Transverse colon (tissue), 4 donors: ENCODE measurements at regions of chr11 and their contacts with region 1.

Region 1: GRCh38 chr11:11787305-11788062 is 54.3 kb upstream of the USP47 start:
- DNase-seq: peak; percentile 81
- H3K4me3 ChIP-seq: no peak overlapping the region
- H3K27ac ChIP-seq: no peak overlapping the region
- H3K4me1 ChIP-seq: no peaks in the 10 kb centered on the region
- H3K27me3 ChIP-seq: no peaks in the 10 kb centered on the region
- CTCF ChIP-seq: peak; percentile 85 to 92 (median 87)
- EP300 ChIP-seq: no peak
- POLR2A ChIP-seq: no peak

Region 2: DNA sequence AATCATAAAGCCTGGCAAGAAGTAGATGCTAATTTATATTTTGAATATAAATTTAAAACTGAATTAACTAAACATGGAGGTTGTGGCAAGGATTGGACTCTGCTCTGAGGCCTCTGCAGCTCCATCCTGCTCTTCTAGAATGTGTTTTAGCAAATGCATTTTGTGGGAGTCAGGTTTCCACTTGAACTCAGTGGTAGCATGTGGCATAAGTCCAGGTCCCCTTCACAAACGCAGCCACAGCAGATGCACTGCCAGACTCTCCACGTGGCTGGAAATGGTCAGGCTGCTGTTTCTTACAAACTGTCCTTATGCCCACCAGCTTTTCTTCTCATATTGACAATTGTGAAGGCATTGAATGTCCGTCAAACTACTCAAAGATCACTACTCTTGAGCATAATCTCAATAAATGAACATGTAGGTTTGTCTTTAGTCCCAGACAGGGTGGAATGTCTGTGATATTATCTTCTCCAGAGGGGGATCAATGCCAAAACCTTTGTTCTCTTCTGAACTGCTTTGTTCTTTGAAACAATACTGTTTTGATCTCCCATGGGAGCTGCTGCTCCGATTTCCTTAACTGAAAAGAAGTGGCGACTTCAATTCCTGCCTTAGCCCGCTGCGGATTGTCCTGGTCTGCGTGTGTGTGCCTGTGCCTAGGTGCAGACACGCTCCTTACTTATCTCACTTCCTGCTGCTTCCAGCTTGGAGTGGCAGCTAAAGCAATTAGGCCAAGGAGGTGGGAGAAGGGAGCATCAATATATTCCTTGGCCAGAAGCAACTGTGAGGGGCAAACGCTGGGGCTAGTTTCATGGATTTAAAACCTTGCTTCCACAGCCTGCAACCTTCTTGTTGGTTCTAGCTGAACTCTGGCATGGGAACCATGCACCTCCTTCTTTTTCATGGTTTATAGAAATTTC is 1003.0 kb before region 1 on chr11:
- in situ Hi-C with region 1: loop called in 1 of 4 experiments (anchors 10 kb)
- intact Hi-C with region 1: no loop called
- DNase-seq: no peak
- H3K4me3 ChIP-seq: no peak overlapping the region
- H3K27ac ChIP-seq: no peak overlapping the region
- H3K4me1 ChIP-seq: no peaks in the 10 kb centered on the region
- H3K27me3 ChIP-seq: no peaks in the 10 kb centered on the region
- CTCF ChIP-seq: no peak
- EP300 ChIP-seq: no peak
- POLR2A ChIP-seq: no peak

Region 3: DNA sequence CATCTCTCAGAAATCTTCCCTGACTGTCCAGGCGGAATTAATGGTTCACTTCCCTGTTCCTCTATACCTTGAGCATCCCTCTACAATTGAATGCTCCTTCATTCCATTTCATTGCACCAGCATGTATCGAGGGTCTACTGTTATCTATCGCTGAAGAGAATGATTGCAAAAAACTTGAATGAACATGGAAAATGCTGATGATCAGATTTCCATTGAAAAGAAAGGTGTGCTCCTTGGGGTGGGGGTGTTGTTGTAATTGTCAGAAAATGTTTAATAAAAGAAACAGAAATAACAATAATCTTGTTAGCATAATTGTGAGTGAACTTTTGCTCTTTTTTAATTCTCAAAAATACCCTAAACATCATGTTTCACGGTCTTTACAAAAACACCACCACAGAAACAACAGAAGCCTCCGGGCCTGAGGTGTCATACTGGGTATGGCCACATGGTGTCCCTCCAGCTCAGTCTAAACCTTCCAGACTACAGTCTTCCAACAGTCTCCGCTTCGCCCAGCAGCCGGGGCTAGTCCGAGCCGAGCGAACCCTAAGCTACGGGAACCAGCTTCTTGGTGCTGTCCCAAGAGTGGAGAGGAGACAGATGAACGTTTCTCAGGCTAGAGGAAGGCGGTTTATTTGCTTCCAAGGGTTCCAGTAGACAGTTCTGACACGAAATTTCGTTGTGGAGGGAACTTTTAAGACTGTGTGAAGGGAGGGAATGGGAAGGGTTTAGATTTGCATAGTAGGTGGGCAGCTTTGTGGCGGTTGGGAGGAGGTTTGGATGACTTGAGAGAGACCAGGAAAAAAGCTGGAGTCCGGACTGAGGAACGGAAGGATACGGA is 853.8 kb before region 1 on chr11:
- in situ Hi-C with region 1: loop called in 1 of 4 experiments (anchors 25 kb)
- intact Hi-C with region 1: loop called (anchors 5 kb)
- DNase-seq: peak; percentile 93
- H3K4me3 ChIP-seq: peak overlapping the region in 3 of 4 donors; percentile 31 to 54 (median 32)
- H3K27ac ChIP-seq: peak overlapping the region; percentile 86 to 97 (median 94)
- H3K4me1 ChIP-seq: peaks cover 12 to 54% (median 30%) of the 10 kb centered on the region in 4 donors
- H3K27me3 ChIP-seq: no peaks in the 10 kb centered on the region
- CTCF ChIP-seq: peak; percentile 92 to 99 (median 97)
- EP300 ChIP-seq: no peak
- POLR2A ChIP-seq: no peak

Region 4: GRCh38 chr11:11028017-11028692 is 759.3 kb before region 1 on chr11:
- in situ Hi-C with region 1: loop called (anchors 5 to 10 kb)
- intact Hi-C with region 1: loop called (anchors 5 kb)
- DNase-seq: peak; percentile 77
- H3K4me3 ChIP-seq: no peak overlapping the region
- H3K27ac ChIP-seq: no peak overlapping the region
- H3K4me1 ChIP-seq: no peaks in the 10 kb centered on the region
- H3K27me3 ChIP-seq: no peaks in the 10 kb centered on the region
- CTCF ChIP-seq: peak; percentile 79 to 83 (median 79)
- EP300 ChIP-seq: no peak
- POLR2A ChIP-seq: no peak

Region 5: DNA sequence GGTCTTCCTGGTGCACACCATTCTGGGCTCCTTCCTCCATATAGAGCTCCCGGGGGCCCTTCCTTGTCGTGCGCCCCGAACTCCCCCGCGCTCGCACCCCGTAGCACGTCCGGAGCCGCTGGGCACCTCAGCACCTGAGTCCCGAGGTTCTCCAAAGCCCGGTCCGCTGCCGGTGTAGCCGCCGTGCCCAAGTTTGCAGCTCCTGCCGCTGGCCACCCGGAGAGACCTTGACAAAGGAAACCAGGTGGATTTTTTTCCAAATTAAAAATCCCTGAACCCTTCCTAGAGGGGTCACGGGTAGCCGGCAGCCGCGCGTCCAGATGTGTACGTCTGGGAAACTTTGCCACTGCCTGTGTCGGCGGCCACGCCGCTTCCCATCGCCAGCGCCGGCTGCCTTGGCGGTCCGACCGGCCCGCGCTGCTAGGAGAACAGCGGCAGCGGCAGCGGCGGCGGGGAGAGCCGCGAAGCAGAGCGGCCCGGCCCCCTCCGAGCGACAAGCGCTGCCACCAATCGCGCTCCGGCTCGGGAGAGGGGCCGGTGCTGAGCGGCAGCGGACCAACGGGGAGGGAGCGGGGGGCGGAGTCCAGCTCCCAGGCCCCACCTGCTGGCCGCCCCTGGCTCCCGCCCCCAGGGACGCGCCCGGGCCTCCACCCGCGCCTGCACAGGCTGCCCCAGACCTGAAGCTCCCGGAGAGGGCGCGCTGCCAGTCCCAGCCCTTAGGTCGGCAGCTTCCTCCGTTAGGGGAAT is 165.7 kb before region 1 on chr11 and contains the start of gene GALNT18:
- in situ Hi-C with region 1: no loop called
- intact Hi-C with region 1: loop called (anchors 10 kb)
- DNase-seq: peak; percentile 92
- H3K4me3 ChIP-seq: peak within 1 kb of the TSS; percentile 19 to 64 (median 44)
- H3K27ac ChIP-seq: peak within 1 kb of the TSS; percentile 73 to 82 (median 76)
- H3K4me1 ChIP-seq: peaks cover 0 to 25% (median 18%) of the 10 kb centered on the region in 4 donors
- H3K27me3 ChIP-seq: peaks cover 19% of the 10 kb centered on the region
- CTCF ChIP-seq: peak; percentile 31 to 75 (median 45)
- EP300 ChIP-seq: no peak
- POLR2A ChIP-seq: peak; percentile 64
- total RNA-seq, gene GALNT18: 5.6 to 22.1 (median 8.4) TPM

Region 6: GRCh38 chr11:12281571-12282478 is 494.3 kb after region 1 on chr11:
- in situ Hi-C with region 1: loop called in 1 of 4 experiments (anchors 25 kb)
- intact Hi-C with region 1: no loop called
- DNase-seq: peak; percentile 87
- H3K4me3 ChIP-seq: no peak overlapping the region
- H3K27ac ChIP-seq: no peak overlapping the region
- H3K4me1 ChIP-seq: peaks cover 0 to 30% (median 5%) of the 10 kb centered on the region in 4 donors
- H3K27me3 ChIP-seq: no peaks in the 10 kb centered on the region
- CTCF ChIP-seq: peak; percentile 94 to 99 (median 97)
- EP300 ChIP-seq: no peak
- POLR2A ChIP-seq: no peak